Activated CD4-positive, alpha-beta T cell treated with anti-CD3 and anti-CD28 coated beads, Interleukin-2, amount 10 ng/mL, durations not matched to agents 24 days and 14 days (primary cell): ENCODE measurements at regions of chr9 and their contacts with region 1.

Region 1: DNA sequence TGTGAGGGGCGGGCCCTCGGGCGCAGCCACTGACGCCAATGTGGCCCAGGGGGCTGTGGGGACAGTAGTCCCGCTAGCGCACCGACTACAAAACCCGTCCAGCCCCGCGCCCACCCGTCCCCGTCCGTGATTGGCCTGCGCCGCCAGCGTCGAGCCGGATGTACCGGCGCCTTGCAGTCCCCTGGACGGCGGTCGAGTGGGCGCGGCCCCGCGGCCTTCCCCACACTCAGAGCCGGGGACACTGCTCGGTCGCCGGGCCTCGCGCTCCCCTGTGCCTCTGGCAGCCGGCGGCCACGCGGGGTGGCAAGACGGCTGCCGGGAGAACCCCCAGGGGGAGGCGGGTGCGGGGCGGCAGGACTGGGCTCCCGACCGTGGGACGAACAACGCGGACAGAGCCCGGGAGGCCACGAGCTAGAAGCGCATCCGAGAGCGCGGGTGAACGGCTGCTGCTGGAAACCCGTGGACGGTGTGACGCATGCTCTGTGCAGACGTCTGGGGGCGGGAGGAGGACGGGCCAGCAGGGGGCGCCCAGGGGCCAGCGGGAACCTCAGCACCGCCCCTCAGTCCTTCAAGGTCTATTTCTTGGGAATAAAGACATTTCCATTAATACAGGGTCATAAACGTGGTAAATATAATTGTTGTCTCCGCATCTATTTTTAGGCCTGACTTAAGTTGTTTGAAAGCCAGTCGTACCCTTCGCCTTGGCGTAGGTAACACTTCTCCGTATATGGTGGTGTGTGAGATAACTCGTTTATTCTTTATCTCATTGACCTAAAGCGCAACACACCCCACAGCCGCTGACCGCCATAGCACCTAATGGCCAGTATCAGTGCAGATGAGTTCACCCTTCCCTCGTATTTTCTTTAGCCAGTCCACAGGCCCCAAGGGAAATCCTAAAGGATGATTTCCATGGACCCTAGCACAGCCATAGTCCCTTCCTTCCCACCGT is 629 bp upstream of the BICD2 start:
- DNase-seq: peak; percentile 99
- H3K4me3 Mint-ChIP-seq: peak overlapping the region; percentile 83
- H3K27ac Mint-ChIP-seq: peak overlapping the region; percentile 91
- H3K4me1 Mint-ChIP-seq: peaks cover 44% of the 10 kb centered on the region
- H3K27me3 Mint-ChIP-seq: peaks cover 3% of the 10 kb centered on the region

Region 2: DNA sequence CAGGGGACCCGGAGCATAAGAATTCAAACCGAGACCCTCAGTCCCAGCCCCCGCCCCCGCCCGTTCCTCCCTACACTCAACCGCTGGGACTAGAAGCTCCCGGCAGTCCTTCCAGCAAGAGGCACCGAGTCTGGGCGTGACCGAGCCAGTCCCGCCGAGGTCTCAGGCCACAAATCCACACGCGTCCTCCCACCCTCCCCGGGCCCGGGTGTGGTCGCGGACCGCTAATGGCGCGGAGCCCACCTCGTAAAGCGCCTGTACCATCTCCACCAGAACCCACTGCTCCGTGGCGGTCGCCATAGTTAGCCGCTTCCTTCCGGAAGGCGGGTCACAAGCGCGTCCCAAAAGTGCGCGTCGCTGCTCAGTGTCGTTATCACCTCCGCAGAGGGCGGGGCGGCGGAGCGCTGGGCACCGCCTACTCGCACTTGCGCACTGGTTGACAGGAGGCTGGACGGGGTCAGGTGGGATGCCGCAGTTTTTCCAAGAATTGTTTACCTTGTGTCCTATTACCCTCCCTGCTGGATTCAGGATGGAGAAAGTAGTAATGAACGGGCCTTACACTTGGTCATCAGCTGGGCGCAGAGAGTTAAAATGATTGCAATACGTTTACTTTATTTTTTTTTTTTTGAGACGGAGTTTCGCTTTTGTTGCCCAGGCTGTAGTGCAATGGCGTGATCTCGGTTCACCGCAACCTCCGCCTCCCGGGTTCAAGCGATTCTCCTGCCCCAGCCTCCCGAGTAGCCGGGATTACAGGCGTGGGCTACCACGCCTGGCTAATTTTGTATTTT is 650.0 kb before region 1 on chr9 and contains the start of gene SPTLC1:
- intact Hi-C with region 1: loop called (anchors 1 kb)
- DNase-seq: peak; percentile 99
- H3K4me3 Mint-ChIP-seq: peak within 1 kb of the TSS; percentile 97
- H3K27ac Mint-ChIP-seq: peak within 1 kb of the TSS; percentile 98
- H3K4me1 Mint-ChIP-seq: peaks cover 21% of the 10 kb centered on the region
- H3K27me3 Mint-ChIP-seq: peaks cover 2% of the 10 kb centered on the region
- total RNA-seq, gene SPTLC1: 62.5 and 64.9 TPM in 2 replicates

Region 3: DNA sequence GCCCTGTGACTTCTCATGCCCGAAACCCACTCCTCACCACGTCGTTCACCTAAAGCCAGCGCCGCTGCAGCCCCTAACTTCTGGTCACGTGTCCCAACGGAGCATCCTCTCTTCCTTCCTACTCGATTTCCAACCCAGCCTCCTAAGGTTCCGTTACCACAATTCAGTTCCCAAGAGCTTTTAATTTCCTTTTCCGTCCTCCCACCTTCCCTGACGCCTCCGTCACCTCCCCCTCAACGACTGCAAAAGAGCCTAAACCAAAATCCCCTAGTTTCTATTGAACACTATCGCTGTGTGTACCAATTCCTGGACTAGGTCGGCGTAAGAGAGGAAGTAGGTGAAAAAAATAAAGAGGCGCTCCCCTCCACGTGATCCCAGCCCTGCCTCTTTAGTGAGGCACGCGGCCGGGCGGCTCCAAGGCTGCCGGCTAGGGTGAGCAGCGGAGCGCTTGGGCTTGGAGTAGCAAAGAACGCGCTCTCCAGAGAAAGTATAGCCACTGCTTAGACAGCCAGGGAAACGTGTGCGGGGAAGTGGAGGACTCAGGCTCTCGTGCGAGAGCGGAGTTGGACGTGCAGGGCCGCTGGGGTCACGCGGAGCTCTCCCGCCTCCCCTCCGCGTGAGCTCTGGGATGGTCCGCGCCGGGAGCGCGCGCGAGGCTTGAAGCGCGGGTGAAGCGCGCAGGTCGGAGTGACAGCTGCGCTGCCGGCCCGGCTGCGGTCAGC is 439.8 kb before region 1 on chr9 and contains the starts of genes CENPP and NOL8:
- intact Hi-C with region 1: loop called (anchors 1 kb)
- DNase-seq: peak; percentile 95
- H3K4me3 Mint-ChIP-seq: peak within 1 kb of the TSS; percentile 98
- H3K27ac Mint-ChIP-seq: peak within 1 kb of the TSS; percentile 97
- H3K4me1 Mint-ChIP-seq: peaks cover 31% of the 10 kb centered on the region
- H3K27me3 Mint-ChIP-seq: no peaks in the 10 kb centered on the region
- total RNA-seq, gene CENPP: 26.9 and 27.5 TPM in 2 replicates
- total RNA-seq, gene NOL8: 84.9 and 90.9 TPM in 2 replicates

Region 4: DNA sequence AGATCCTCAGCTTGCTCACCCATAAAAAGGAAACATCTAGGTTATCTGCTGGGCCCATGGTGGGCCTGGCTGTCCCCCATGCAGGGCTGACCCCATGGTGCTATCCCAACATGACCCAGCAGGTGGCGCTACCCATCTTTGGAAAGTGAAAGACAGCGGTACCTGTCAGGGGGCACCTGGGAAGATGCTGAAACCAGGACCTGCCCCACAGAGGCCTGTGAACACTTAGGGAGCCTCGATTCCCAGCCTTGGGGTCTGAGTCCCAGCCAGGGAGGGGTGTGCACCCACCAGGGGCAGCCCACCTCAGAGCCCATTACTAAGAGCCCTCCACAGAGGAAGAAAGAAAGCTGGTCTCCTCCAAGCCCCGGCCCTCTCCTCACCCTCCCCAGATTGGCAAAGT is 48.7 kb before region 1 on chr9:
- intact Hi-C with region 1: loop called (anchors 5 kb)
- DNase-seq: peak; percentile 96
- H3K4me3 Mint-ChIP-seq: no peak overlapping the region
- H3K27ac Mint-ChIP-seq: no peak overlapping the region
- H3K4me1 Mint-ChIP-seq: peaks cover 8% of the 10 kb centered on the region
- H3K27me3 Mint-ChIP-seq: no peaks in the 10 kb centered on the region

Region 5: DNA sequence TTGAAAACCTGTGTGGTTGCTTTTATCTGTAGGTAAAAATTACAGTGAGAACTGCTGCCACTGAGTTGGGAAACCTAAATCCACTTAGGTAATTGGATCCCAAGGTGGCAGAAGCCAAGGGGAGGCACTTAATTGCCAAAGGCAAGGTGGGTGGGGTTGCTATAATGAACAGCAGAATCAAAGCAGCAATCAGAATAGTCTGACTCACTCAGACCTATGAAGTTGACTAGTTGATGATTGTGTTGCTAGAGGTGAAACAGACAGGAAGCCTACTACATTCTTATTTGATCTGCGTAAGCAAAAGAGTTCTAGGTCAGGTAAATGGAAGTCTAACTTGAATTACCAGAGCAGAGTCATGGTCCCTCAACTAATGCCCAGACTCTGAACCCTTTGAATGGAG is 16.7 kb after region 1 on chr9:
- intact Hi-C with region 1: no loop called
- DNase-seq: no peak
- H3K4me3 Mint-ChIP-seq: no peak overlapping the region
- H3K27ac Mint-ChIP-seq: no peak overlapping the region
- H3K4me1 Mint-ChIP-seq: no peaks in the 10 kb centered on the region
- H3K27me3 Mint-ChIP-seq: peaks cover 10% of the 10 kb centered on the region

Region 6: GRCh38 chr9:92820964-92821363 is 55.7 kb after region 1 on chr9:
- intact Hi-C with region 1: no loop called
- DNase-seq: peak; percentile 43
- H3K4me3 Mint-ChIP-seq: no peak overlapping the region
- H3K27ac Mint-ChIP-seq: no peak overlapping the region
- H3K4me1 Mint-ChIP-seq: no peaks in the 10 kb centered on the region
- H3K27me3 Mint-ChIP-seq: peaks cover 20% of the 10 kb centered on the region

Region 7: DNA sequence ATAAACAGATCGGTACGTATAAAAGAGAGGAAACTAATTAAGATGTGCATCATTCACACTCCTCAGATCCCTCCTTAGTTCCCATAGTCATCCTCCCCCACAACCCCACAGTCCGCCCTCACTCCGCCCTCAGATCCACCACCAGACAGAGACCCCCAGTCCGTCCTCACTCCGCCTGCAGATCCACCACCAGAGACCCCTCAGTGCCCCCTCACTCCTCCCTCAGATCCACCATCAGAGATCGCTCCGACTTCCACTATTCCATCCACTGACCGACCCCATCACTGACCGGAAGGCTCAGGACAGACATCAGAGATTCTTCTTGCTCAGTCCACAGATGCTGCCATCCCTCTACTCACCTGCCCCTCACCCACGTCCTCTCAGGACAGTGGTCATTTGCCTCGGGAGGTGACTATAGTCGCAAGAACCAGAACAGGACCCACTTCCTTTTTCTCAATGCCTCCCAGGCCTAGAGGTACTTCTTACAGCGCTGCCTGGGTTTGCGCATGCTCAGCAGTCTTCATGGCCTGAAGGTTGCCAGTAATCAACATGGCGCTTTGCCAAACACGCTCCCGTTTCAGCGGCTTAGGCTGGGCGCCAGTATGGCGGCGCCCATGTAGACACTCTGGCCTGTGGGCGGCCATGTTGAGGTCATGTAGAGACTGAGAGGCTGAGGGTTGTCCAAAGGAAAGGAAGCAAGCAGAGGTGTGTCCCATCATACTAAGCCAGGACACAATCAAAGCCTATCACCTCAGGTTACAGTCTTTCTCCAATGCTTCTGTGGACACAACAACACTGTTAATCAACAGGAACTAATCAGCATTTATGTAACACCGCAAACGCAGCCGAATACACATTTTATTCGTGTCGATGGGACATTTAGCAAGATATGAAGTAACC is 112.5 kb after region 1 on chr9 and contains the start of gene ZNF484:
- intact Hi-C with region 1: loop called (anchors 1 kb)
- DNase-seq: peak; percentile 98
- H3K4me3 Mint-ChIP-seq: peak within 1 kb of the TSS; percentile 98
- H3K27ac Mint-ChIP-seq: peak within 1 kb of the TSS; percentile 95
- H3K4me1 Mint-ChIP-seq: peaks cover 33% of the 10 kb centered on the region
- H3K27me3 Mint-ChIP-seq: no peaks in the 10 kb centered on the region
- total RNA-seq, gene ZNF484: 7.3 and 7.7 TPM in 2 replicates

Region 8: GRCh38 chr9:93566408-93567270 is 801.4 kb after region 1 on chr9:
- intact Hi-C with region 1: loop called (anchors 2 kb)
- DNase-seq: peak; percentile 100
- H3K4me3 Mint-ChIP-seq: peak overlapping the region; percentile 89
- H3K27ac Mint-ChIP-seq: peak overlapping the region; percentile 93
- H3K4me1 Mint-ChIP-seq: peaks cover 20% of the 10 kb centered on the region
- H3K27me3 Mint-ChIP-seq: no peaks in the 10 kb centered on the region